ENCODE measurements at regions of chr13 and their contacts with region 1.

Region 1: DNA sequence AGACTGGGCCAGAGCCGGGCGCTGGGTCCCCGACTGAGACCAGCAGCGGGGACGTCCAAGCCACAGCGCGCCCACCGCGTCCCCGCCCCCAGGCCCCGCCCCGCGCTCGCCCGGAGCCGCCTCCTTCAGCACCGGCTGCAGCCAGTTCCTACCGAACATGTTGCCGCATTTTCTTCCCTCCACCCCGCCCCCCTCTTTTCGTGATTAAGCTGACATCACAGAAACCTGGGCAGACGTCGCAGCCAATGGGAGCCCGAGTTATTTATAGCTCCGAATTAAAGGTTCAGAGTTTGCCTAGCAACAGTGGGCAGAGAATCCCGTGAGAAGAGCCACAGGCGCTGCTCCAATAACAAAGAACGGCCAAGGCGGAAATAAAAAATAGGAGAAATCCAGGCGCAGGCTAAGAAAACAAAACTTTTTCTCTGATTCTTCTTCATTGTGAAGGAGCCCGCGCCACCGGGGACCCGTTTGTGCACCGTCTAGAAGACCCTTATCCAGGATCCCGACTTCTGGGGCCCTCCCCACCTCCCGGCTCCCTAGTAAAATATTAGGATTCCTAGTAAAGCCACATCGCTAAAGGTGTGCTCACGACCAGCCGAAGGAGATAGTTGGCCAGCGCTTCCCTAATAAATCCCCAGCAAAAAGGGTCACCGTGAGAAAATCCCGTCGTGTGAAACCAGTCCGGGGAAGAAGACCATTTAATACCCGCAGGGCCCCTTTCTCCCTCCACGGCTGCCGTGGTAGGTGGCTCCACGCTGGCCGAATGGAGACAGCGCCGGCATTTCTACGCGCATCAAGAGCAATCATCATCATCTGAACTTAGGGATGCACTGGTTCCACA is 61.7 kb downstream of the SERP2 start:
- DNase-seq: peak; percentile 91 to 98
- ATAC-seq: peak; percentile 79 to 87 (median 82)
- H3K4me3 ChIP-seq: peak overlapping the region; percentile 59 to 93 (median 70)
- H3K27ac ChIP-seq: peak overlapping the region; percentile 79 to 99 (median 94)
- H3K4me1 ChIP-seq: peaks cover 0 to 42% (median 41%) of the 10 kb centered on the region in 9 donors
- H3K27me3 ChIP-seq: no peaks in the 10 kb centered on the region
- CTCF ChIP-seq: no peak

Region 2: GRCh38 chr13:43596924-43597598 is 838.3 kb before region 1 on chr13:
- intact Hi-C with region 1: no loop called
- DNase-seq: no peak
- ATAC-seq: no peak
- H3K4me3 ChIP-seq: no peak overlapping the region
- H3K27ac ChIP-seq: no peak overlapping the region
- H3K4me1 ChIP-seq: no peaks in the 10 kb centered on the region
- H3K27me3 ChIP-seq: no peaks in the 10 kb centered on the region
- CTCF ChIP-seq: no peak

Region 3: GRCh38 chr13:43905435-43906031 is 529.8 kb before region 1 on chr13:
- intact Hi-C with region 1: loop called (anchors 1 to 5 kb)
- DNase-seq: peak in 1 of 2 donors; percentile 42
- ATAC-seq: peak in 6 of 8 donors; percentile 63 to 78 (median 68)
- H3K4me3 ChIP-seq: no peak overlapping the region
- H3K27ac ChIP-seq: no peak overlapping the region
- H3K4me1 ChIP-seq: peaks cover 0 to 17% (median 5%) of the 10 kb centered on the region in 9 donors
- H3K27me3 ChIP-seq: peaks cover 0 to 18% (median 0%) of the 10 kb centered on the region in 7 donors
- CTCF ChIP-seq: peak; percentile 65 to 90 (median 81)

Region 4: GRCh38 chr13:44108331-44108858 is 327.0 kb before region 1 on chr13:
- intact Hi-C with region 1: loop called in 2 of 10 experiments (anchors 5 kb)
- DNase-seq: peak; percentile 53 to 54
- ATAC-seq: peak; percentile 56 to 95 (median 78)
- H3K4me3 ChIP-seq: no peak overlapping the region
- H3K27ac ChIP-seq: peak overlapping the region; percentile 56 to 80 (median 72)
- H3K4me1 ChIP-seq: peaks cover 14 to 80% (median 42%) of the 10 kb centered on the region in 9 donors
- H3K27me3 ChIP-seq: no peaks in the 10 kb centered on the region
- CTCF ChIP-seq: no peak

Region 5: GRCh38 chr13:44237276-44237767 is 198.0 kb before region 1 on chr13:
- intact Hi-C with region 1: loop called in 9 of 10 experiments (anchors 1 to 10 kb)
- DNase-seq: peak; percentile 32 to 90
- ATAC-seq: peak; percentile 97 to 99 (median 98)
- H3K4me3 ChIP-seq: peak overlapping the region in 1 of 10 donors; percentile 14
- H3K27ac ChIP-seq: peak overlapping the region; percentile 71 to 94 (median 88)
- H3K4me1 ChIP-seq: peaks cover 20 to 40% (median 32%) of the 10 kb centered on the region in 9 donors
- H3K27me3 ChIP-seq: no peaks in the 10 kb centered on the region
- CTCF ChIP-seq: no peak

Region 6: DNA sequence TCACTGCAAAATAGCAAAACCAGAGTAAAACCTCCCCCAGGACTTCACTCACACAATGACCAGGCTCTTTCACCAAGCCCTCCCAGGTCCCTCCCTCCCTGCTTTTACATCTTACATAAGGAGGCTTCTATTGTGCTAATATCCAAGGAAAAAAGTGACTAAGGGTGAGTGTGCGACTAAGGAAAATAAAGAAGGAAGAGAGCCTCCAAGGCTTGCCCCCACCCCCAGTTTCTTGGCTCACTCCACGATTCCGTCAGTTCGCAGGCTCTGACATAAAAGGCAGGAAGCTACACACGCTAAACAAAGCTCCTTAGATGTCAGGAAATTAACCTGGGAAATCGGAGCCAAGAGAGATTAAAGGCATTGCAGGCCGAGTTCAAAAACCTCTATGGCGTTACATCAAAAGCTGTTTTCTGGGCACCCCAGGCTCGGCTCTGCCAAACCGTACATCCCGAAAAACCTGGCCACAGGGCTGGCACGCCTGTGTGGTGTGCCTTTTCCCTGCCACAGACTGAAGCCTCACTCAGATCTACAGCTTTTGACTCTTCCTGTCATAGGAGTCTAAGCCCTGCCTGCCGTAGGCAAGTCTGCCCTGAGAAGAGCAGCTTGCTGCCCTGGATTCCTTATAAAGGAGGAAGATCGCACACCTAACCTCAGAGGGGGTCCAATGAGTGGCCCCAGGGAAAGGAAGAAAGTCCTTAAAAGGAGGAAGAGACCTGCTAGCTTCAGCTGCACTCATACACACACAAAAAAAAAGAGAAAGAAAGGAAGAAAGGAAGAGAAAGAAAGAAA is 128.8 kb before region 1 on chr13:
- intact Hi-C with region 1: loop called in 7 of 10 experiments (anchors 2 to 10 kb)
- DNase-seq: peak; percentile 49 to 89
- ATAC-seq: peak; percentile 58 to 89 (median 72)
- H3K4me3 ChIP-seq: peak overlapping the region in 3 of 10 donors; percentile 22 to 25 (median 22)
- H3K27ac ChIP-seq: peak overlapping the region; percentile 39 to 95 (median 89)
- H3K4me1 ChIP-seq: peaks cover 5 to 94% (median 52%) of the 10 kb centered on the region in 9 donors
- H3K27me3 ChIP-seq: no peaks in the 10 kb centered on the region
- CTCF ChIP-seq: no peak

Region 7: GRCh38 chr13:44396701-44397580 is 38.4 kb before region 1 on chr13:
- intact Hi-C with region 1: loop called in 1 of 10 experiments (anchors 5 kb)
- DNase-seq: peak; percentile 38 to 51
- ATAC-seq: peak; percentile 58 to 89 (median 76)
- H3K4me3 ChIP-seq: peak overlapping the region in 5 of 10 donors; percentile 13 to 33 (median 18)
- H3K27ac ChIP-seq: peak overlapping the region in 8 of 10 donors; percentile 3 to 72 (median 47)
- H3K4me1 ChIP-seq: peaks cover 0 to 15% (median 6%) of the 10 kb centered on the region in 9 donors
- H3K27me3 ChIP-seq: no peaks in the 10 kb centered on the region
- CTCF ChIP-seq: no peak

Region 8: GRCh38 chr13:44498969-44499368 is 63.6 kb after region 1 on chr13:
- intact Hi-C with region 1: no loop called
- DNase-seq: no peak
- ATAC-seq: no peak
- H3K4me3 ChIP-seq: no peak overlapping the region
- H3K27ac ChIP-seq: no peak overlapping the region
- H3K4me1 ChIP-seq: peaks cover 0 to 16% (median 4%) of the 10 kb centered on the region in 9 donors
- H3K27me3 ChIP-seq: no peaks in the 10 kb centered on the region
- CTCF ChIP-seq: no peak